Activated naive CD8-positive, alpha-beta T cell treated with anti-CD3 and anti-CD28 coated beads, Interleukin-2, amount 10 ng/mL, durations not matched to agents 7 days and 5 days (primary cell): ENCODE measurements at regions of chr1 and their contacts with region 1.

Region 1: GRCh38 chr1:89022167-89022959 is at the start of gene GBP3:
- DNase-seq: no peak
- ATAC-seq: peak; percentile 75
- H3K4me3 Mint-ChIP-seq: peak within 1 kb of the TSS; percentile 90
- H3K27ac Mint-ChIP-seq: peak within 1 kb of the TSS; percentile 85
- H3K4me1 Mint-ChIP-seq: peaks cover 34% of the 10 kb centered on the region
- H3K27me3 Mint-ChIP-seq: no peaks in the 10 kb centered on the region
- total RNA-seq, gene GBP3: 45.9 to 50.7 TPM

Region 2: DNA sequence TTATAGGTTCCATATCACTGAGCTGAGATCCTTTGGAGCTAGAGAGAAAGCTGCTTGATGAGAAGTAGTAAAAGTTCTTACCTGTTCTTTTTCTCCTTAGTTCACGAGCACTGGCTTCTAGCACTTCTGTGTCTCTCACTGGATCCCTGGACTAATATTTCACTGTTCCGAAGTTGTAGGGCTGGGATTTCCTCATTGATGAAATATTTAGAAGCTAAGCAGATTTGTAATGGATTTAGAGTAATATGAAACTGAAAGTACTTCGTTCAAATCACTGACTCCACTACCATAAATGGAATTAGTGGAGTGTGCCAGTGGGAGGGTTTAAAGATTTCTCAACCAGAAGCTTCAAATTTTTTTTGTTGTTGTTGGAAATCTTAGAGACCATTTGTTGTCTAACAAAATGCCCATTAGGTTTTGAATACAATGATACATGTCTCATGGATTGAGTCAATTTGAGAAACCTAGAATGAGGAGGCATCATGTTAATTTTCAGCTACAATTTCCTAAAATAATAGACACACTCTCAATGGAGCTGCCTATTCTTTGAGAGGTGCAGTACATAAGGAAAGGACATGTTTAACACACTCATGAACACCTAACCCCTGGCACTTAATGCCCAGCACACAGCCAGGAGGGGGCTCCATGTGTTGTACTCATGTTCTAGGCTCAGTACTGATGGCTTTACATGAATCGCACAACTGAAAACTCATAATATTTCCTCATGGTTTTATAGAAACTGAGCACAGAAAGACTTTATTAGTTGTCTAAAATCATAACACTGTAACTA is 42.9 kb after region 1 on chr1 and contains the start of gene GBP1:
- POLR2A ChIA-PET with region 1: interaction called, 40 read pairs
- DNase-seq: no peak
- ATAC-seq: peak; percentile 81
- H3K4me3 Mint-ChIP-seq: peak within 1 kb of the TSS; percentile 92
- H3K27ac Mint-ChIP-seq: peak within 1 kb of the TSS; percentile 94
- H3K4me1 Mint-ChIP-seq: peaks cover 45% of the 10 kb centered on the region
- H3K27me3 Mint-ChIP-seq: no peaks in the 10 kb centered on the region
- total RNA-seq, gene GBP1: 150 to 160 TPM

Region 3: DNA sequence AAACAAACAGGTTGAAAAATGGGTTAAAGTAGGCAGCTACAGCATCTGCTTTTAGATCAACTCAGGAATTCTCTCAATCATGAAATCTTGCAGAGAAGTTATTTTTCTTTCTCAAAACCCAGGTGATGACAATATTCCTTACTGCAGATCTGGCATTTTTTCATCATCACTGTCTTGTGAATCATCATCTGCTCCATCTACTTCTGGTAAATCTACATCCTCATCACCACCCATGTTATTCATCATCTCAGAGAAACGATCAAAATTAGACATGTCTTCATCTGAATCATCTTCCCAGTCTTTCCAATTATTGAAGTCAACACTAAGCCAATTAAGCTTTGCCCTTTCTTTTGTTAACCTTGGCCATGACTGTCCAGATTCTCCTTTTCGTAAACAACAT is 81.8 kb after region 1 on chr1:
- POLR2A ChIA-PET with region 1: no interaction called
- DNase-seq: no peak
- ATAC-seq: no peak
- H3K4me3 Mint-ChIP-seq: no peak overlapping the region
- H3K27ac Mint-ChIP-seq: no peak overlapping the region
- H3K4me1 Mint-ChIP-seq: peaks cover 1% of the 10 kb centered on the region
- H3K27me3 Mint-ChIP-seq: no peaks in the 10 kb centered on the region